ENCODE measurements at regions of chr16 and their contacts with region 1.

Region 1: GRCh38 chr16:27455700-27456099 is 53.7 kb downstream of the IL21R start:
- DNase-seq: no peak
- ATAC-seq: no peak
- H3K4me3 ChIP-seq: no peak overlapping the region
- H3K27ac ChIP-seq: no peak overlapping the region
- H3K4me1 ChIP-seq: no peaks in the 10 kb centered on the region
- H3K27me3 ChIP-seq: peaks cover 2 to 21% of the 10 kb centered on the region in 2 experiments; a peak in 3 of 5 replicates
- CTCF ChIP-seq: no peak
- EP300 ChIP-seq: no peak
- POLR2A ChIP-seq: no peak
- RAD21 ChIP-seq: no peak

Region 2: DNA sequence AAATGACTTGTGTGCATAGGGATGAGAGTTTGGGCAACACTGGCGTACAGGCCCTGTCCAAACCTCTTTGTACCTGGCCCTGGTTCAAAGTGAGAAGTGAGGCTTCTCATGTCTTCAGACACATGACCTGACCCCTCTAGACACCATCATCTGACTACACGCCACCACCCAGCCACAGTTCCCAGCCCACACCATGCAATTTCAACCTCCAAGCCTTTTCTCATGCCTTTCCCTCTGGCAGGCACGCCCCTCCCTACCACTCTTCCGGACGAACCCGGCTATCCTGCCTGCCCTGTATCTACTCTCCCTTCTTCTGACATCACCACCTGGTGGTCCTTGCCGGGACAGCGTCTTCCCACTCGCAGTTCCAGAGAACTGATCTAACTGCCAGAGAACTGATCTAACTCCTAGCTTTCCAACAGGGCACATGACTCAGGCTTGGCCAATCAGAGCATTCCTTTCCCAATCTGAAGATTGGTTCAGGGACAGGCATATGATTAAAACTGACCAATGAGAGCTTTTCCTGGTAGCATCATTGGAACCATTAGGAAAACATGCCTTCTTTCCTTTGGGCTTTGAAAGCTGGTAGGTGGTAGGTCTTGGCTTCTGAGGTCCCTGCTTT is 80.8 kb before region 1 on chr16:
- CTCF ChIA-PET with region 1: interaction called, 4 read pairs
- POLR2A ChIA-PET with region 1: no interaction called
- in situ Hi-C with region 1: no loop called
- intact Hi-C with region 1: loop called (anchors 5 kb)
- DNase-seq: peak; percentile 92
- ATAC-seq: peak; percentile 98
- H3K4me3 ChIP-seq: peak overlapping the region in 2 of 3 experiments; percentile 5 to 38; a peak in 1 of 6 replicates
- H3K27ac ChIP-seq: no peak overlapping the region
- H3K4me1 ChIP-seq: peaks cover 18% of the 10 kb centered on the region
- H3K27me3 ChIP-seq: peaks cover under 1 to 7% of the 10 kb centered on the region in 2 experiments; a peak in 2 of 5 replicates
- CTCF ChIP-seq: peak; percentile 94
- EP300 ChIP-seq: no peak
- POLR2A ChIP-seq: peak in 1 of 2 experiments; percentile 44; a peak in 1 of 4 replicates
- RAD21 ChIP-seq: peak; percentile 72

Measured in HepG2 (cell line).